CD4-positive, alpha-beta T cell (primary cell): ENCODE measurements at regions of chr3 and their contacts with region 1.

Region 1: DNA sequence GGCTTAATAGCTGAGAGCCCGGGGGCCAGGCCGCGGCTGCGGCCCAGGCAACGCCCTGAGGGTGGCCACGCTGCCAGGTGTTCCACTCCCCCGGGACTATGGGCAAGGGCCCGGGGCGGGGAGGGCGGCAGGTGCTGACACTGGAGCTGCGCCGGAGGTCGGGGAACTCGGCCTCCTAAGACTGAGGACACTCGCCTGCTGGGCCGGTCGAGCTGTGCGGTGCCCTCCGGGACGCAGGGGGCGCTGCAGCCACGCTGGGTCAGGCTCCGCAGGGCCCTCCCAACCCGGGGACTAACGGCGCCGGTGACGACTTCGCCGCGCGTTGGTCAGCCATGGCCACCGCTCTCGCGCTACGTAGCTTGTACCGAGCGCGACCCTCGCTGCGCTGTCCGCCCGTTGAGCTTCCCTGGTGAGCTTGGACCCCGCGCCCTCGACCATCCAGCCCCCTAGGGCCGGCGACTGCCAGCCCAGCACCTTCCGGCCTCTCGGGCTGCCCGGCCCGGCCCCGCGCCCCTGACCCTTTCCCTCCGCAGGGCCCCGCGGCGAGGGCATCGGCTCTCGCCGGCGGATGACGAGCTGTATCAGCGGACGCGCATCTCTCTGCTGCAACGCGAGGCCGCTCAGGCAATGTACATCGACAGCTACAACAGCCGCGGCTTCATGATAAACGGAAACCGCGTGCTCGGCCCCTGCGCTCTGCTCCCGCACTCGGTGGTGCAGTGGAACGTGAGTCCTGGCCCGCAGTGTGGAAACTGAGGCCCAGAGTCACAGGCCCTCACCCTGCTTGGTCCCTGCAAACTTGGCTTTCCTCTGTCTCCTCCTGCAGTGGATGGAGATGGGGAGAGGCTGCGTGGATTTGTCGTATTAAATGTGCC is at the start of gene NDUFAF3:
- DNase-seq: peak; percentile 81 to 95 (median 90)
- ATAC-seq: peak; percentile 74
- H3K4me3 ChIP-seq: peak within 1 kb of the TSS; percentile 80
- H3K4me3 Mint-ChIP-seq: peak within 1 kb of the TSS; percentile 95
- H3K27ac ChIP-seq: peak within 1 kb of the TSS; percentile 92 to 98
- H3K27ac Mint-ChIP-seq: peak within 1 kb of the TSS; percentile 90
- H3K4me1 ChIP-seq: peaks cover 63% of the 10 kb centered on the region
- H3K4me1 Mint-ChIP-seq: peaks cover 50% of the 10 kb centered on the region
- H3K27me3 ChIP-seq: no peaks in the 10 kb centered on the region
- H3K27me3 Mint-ChIP-seq: no peaks in the 10 kb centered on the region
- CTCF ChIP-seq: peak; percentile 99
- total RNA-seq, gene NDUFAF3: 52.7 to 53.2 TPM

Region 2: DNA sequence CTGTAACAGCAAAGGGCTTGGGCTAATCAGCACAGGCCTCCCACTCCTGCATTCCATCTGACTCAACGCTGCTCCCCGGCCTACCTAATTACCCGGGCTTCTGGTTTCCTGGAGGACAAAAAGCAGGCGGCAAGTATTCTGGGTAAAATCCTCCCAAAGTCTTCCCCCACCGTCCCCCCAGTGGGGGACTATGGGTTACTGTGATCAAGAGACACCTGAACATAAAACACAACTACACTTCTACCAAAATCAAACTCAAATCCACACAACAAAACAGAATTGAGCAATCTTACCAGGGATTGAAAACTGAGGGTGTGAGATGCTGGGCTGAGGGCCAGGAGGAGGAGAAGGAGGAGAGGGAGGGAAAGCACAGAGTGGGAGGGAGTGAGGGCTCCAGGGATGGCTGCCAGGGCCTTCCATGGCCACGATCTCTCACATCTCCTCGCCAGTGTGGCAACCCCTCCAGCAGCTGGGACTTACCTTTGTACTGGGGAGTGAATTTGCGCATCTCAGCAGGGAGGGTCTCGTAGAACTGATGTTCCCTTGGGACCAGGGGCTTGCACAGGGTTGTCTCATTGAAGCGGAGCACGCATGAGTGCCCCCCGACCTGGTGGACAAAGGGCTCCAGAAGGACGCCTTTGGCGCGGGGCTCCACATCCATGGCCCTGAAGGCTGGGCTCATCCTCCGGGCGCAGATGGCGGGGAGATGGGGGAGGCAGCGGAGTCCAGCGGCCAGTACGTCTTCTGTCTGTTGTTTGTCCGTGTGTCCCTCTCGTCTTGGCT is 327.2 kb before region 1 on chr3:
- CTCF ChIA-PET with region 1: no interaction called
- POLR2A ChIA-PET with region 1: no interaction called
- intact Hi-C with region 1: no loop called
- DNase-seq: no peak
- ATAC-seq: no peak
- H3K4me3 ChIP-seq: no peak overlapping the region
- H3K4me3 Mint-ChIP-seq: no peak overlapping the region
- H3K27ac ChIP-seq: no peak overlapping the region
- H3K27ac Mint-ChIP-seq: no peak overlapping the region
- H3K4me1 ChIP-seq: peaks cover 14% of the 10 kb centered on the region
- H3K4me1 Mint-ChIP-seq: peaks cover 17% of the 10 kb centered on the region
- H3K27me3 ChIP-seq: no peaks in the 10 kb centered on the region
- H3K27me3 Mint-ChIP-seq: no peaks in the 10 kb centered on the region
- CTCF ChIP-seq: no peak

Region 3: DNA sequence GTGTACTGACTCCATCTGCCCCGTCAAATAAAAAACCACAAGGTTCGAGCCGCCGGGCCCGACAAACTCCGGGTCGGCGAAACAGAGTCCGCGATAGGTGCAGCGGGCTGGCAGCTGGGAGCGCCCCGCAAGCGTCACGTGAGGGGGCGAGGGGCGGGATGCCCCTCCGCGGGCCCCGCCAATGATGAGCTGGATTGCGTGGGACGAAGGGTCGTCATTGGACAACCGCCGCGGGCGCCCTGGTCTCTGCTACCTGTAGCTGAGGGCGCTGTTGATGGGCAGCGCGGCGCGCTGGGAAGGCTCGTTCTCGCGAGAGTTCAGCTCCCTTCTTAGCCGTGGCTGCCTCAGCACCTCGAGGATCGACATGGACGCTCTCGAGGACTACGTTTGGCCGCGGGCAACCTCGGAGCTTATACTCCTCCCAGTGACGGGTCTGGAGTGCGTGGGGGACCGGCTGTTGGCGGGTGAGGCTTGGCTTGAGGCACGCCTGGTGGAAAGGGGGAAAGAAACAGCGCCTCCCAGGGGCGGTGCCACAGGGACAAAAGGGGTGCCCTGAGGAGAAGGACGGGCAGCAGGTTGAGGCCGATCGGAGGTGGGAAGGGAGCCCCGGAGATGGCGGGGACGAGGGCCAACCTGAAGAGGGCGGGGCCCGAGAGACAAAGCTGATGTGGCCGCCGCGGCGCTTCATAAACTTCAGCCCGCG is 14.8 kb before region 1 on chr3 and contains the start of gene WDR6:
- CTCF ChIA-PET with region 1: interaction called, 59 read pairs
- POLR2A ChIA-PET with region 1: interaction called, 331 read pairs
- intact Hi-C with region 1: loop called (anchors 1 to 2 kb)
- DNase-seq: peak; percentile 93 to 99 (median 96)
- ATAC-seq: peak; percentile 86
- H3K4me3 ChIP-seq: peak within 1 kb of the TSS; percentile 99
- H3K4me3 Mint-ChIP-seq: peak within 1 kb of the TSS; percentile 99
- H3K27ac ChIP-seq: peak within 1 kb of the TSS; percentile 89 to 99
- H3K27ac Mint-ChIP-seq: peak within 1 kb of the TSS; percentile 97
- H3K4me1 ChIP-seq: peaks cover 25% of the 10 kb centered on the region
- H3K4me1 Mint-ChIP-seq: peaks cover 27% of the 10 kb centered on the region
- H3K27me3 ChIP-seq: no peaks in the 10 kb centered on the region
- H3K27me3 Mint-ChIP-seq: no peaks in the 10 kb centered on the region
- CTCF ChIP-seq: peak; percentile 19
- total RNA-seq, gene WDR6: 132 to 134 TPM

Region 4: GRCh38 chr3:49104483-49105291 is 82.6 kb after region 1 on chr3 and contains the start of gene QARS1:
- CTCF ChIA-PET with region 1: no interaction called
- POLR2A ChIA-PET with region 1: interaction called, 17 read pairs
- intact Hi-C with region 1: no loop called
- DNase-seq: peak; percentile 79 to 93 (median 85)
- ATAC-seq: peak; percentile 99
- H3K4me3 ChIP-seq: peak within 1 kb of the TSS; percentile 98
- H3K4me3 Mint-ChIP-seq: peak within 1 kb of the TSS; percentile 99
- H3K27ac ChIP-seq: peak within 1 kb of the TSS; percentile 71 to 78
- H3K27ac Mint-ChIP-seq: peak within 1 kb of the TSS; percentile 99
- H3K4me1 ChIP-seq: peaks cover 25% of the 10 kb centered on the region
- H3K4me1 Mint-ChIP-seq: peaks cover 31% of the 10 kb centered on the region
- H3K27me3 ChIP-seq: no peaks in the 10 kb centered on the region
- H3K27me3 Mint-ChIP-seq: no peaks in the 10 kb centered on the region
- CTCF ChIP-seq: no peak
- total RNA-seq, gene QARS1: 264 to 287 TPM

Region 5: GRCh38 chr3:49929331-49930240 is 907.5 kb after region 1 on chr3 and contains the start of gene MON1A:
- CTCF ChIA-PET with region 1: no interaction called
- POLR2A ChIA-PET with region 1: interaction called, 3 read pairs
- intact Hi-C with region 1: loop called in 1 of 2 experiments (anchors 10 kb)
- DNase-seq: peak; percentile 67 to 91 (median 83)
- ATAC-seq: peak; percentile 92
- H3K4me3 ChIP-seq: peak within 1 kb of the TSS; percentile 75
- H3K4me3 Mint-ChIP-seq: peak within 1 kb of the TSS; percentile 85
- H3K27ac ChIP-seq: peak within 1 kb of the TSS; percentile 74 to 78
- H3K27ac Mint-ChIP-seq: peak within 1 kb of the TSS; percentile 86
- H3K4me1 ChIP-seq: peaks cover 20% of the 10 kb centered on the region
- H3K4me1 Mint-ChIP-seq: peaks cover 38% of the 10 kb centered on the region
- H3K27me3 ChIP-seq: no peaks in the 10 kb centered on the region
- H3K27me3 Mint-ChIP-seq: no peaks in the 10 kb centered on the region
- CTCF ChIP-seq: no peak
- total RNA-seq, gene MON1A: 0.85 to 1.3 TPM